ENCODE measurements at regions of chr16 and their contacts with region 1.

Region 1: GRCh38 chr16:48632137-48632774 is 22.3 kb upstream of the N4BP1 start:
- DNase-seq: no peak
- H3K4me3 Mint-ChIP-seq: no peak overlapping the region
- H3K27ac Mint-ChIP-seq: no peak overlapping the region
- H3K4me1 Mint-ChIP-seq: peaks cover 10% of the 10 kb centered on the region
- H3K27me3 Mint-ChIP-seq: no peaks in the 10 kb centered on the region

Region 2: DNA sequence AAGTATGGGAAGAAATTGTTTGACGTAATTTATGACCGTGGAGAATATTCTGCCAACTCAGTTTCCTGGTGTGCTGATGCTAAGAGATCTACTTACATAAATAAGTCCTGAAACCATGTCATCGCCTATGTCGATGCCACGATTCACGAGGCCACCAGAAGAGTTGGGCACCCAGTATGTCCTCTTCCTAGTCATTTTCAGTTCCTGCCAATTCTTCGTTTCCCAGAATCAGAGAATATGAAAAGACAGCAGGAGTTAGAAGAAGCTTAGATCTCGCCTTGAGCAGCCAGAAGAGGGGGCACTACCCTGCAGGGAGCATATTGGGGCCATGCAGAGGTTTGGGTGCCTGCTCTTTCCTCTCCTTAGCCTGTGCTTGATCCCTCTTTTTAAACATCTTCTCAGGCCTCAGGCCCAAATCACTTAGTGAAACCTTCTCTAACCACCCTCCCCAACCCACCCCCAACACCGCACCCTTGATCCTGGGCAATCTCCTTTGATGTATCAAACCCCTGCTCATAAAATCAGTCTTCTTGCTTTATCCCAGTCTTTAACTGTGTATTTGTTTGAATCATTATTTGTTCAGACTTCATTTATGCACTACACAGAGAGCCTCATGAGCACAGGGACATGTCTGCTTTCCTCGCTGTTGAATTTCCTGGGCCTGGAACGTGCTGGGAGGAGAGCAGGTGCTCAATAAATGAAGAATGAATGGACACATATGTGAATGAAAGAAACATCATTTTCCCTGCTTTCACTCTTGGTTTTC is 400.3 kb before region 1 on chr16:
- CTCF ChIA-PET with region 1: interaction called, 17 read pairs
- POLR2A ChIA-PET with region 1: no interaction called
- DNase-seq: peak; percentile 61
- H3K4me3 Mint-ChIP-seq: no peak overlapping the region
- H3K27ac Mint-ChIP-seq: peak overlapping the region; percentile 81
- H3K4me1 Mint-ChIP-seq: peaks cover 22% of the 10 kb centered on the region
- H3K27me3 Mint-ChIP-seq: no peaks in the 10 kb centered on the region

Region 3: GRCh38 chr16:48353565-48354163 is 278.6 kb before region 1 on chr16:
- CTCF ChIA-PET with region 1: interaction called, 11 read pairs
- POLR2A ChIA-PET with region 1: interaction called, 6 read pairs
- DNase-seq: peak; percentile 76
- H3K4me3 Mint-ChIP-seq: no peak overlapping the region
- H3K27ac Mint-ChIP-seq: peak overlapping the region; percentile 72
- H3K4me1 Mint-ChIP-seq: peaks cover 9% of the 10 kb centered on the region
- H3K27me3 Mint-ChIP-seq: no peaks in the 10 kb centered on the region

Region 4: GRCh38 chr16:48613041-48613957 is 19.0 kb before region 1 on chr16:
- CTCF ChIA-PET with region 1: interaction called, 13 read pairs
- POLR2A ChIA-PET with region 1: no interaction called
- DNase-seq: peak; percentile 81
- H3K4me3 Mint-ChIP-seq: peak overlapping the region; percentile 68
- H3K27ac Mint-ChIP-seq: peak overlapping the region; percentile 99
- H3K4me1 Mint-ChIP-seq: peaks cover 66% of the 10 kb centered on the region
- H3K27me3 Mint-ChIP-seq: no peaks in the 10 kb centered on the region

Region 5: GRCh38 chr16:48647794-48648193 is 15.5 kb after region 1 on chr16:
- CTCF ChIA-PET with region 1: no interaction called
- POLR2A ChIA-PET with region 1: no interaction called
- DNase-seq: no peak
- H3K4me3 Mint-ChIP-seq: no peak overlapping the region
- H3K27ac Mint-ChIP-seq: no peak overlapping the region
- H3K4me1 Mint-ChIP-seq: no peaks in the 10 kb centered on the region
- H3K27me3 Mint-ChIP-seq: peaks cover 13% of the 10 kb centered on the region

Region 6: DNA sequence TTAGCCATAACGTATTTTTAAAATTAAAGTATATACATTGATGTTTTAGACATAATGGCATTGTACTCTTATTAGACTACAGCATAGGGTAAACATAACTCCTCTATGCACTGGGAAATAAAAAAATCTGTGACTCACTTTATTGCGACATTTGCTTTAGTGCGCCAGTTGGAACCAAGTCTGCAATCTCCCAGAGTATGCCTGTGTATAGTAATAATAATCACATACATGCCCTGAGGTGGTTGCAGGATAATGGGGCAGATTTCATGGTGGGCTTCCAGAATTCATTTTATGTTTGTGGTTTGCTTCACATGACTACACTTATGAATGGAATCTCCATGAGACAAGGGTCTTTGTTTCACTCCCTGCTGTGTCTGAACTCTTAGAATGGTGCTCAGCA is 44.6 kb after region 1 on chr16:
- CTCF ChIA-PET with region 1: no interaction called
- POLR2A ChIA-PET with region 1: no interaction called
- DNase-seq: no peak
- H3K4me3 Mint-ChIP-seq: no peak overlapping the region
- H3K27ac Mint-ChIP-seq: no peak overlapping the region
- H3K4me1 Mint-ChIP-seq: no peaks in the 10 kb centered on the region
- H3K27me3 Mint-ChIP-seq: peaks cover 5% of the 10 kb centered on the region

Measured in activated CD4-positive, alpha-beta T cell treated with anti-CD3 and anti-CD28 coated beads, Interleukin-2, amount 10 ng/mL, durations not matched to agents 7 days and 5 days (primary cell).